ENCODE measurements at regions of chr1 and their contacts with region 1.

Region 1: GRCh38 chr1:42846257-42847110 is at the start of gene ZNF691:
- DNase-seq: peak; percentile 94
- ATAC-seq: peak; percentile 93
- H3K4me3 Mint-ChIP-seq: peak within 1 kb of the TSS; percentile 97
- H3K27ac Mint-ChIP-seq: peak within 1 kb of the TSS; percentile 89
- H3K4me1 Mint-ChIP-seq: peaks cover 34% of the 10 kb centered on the region
- H3K27me3 Mint-ChIP-seq: no peaks in the 10 kb centered on the region
- total RNA-seq, gene ZNF691: 10.5 to 11.7 TPM

Region 2: DNA sequence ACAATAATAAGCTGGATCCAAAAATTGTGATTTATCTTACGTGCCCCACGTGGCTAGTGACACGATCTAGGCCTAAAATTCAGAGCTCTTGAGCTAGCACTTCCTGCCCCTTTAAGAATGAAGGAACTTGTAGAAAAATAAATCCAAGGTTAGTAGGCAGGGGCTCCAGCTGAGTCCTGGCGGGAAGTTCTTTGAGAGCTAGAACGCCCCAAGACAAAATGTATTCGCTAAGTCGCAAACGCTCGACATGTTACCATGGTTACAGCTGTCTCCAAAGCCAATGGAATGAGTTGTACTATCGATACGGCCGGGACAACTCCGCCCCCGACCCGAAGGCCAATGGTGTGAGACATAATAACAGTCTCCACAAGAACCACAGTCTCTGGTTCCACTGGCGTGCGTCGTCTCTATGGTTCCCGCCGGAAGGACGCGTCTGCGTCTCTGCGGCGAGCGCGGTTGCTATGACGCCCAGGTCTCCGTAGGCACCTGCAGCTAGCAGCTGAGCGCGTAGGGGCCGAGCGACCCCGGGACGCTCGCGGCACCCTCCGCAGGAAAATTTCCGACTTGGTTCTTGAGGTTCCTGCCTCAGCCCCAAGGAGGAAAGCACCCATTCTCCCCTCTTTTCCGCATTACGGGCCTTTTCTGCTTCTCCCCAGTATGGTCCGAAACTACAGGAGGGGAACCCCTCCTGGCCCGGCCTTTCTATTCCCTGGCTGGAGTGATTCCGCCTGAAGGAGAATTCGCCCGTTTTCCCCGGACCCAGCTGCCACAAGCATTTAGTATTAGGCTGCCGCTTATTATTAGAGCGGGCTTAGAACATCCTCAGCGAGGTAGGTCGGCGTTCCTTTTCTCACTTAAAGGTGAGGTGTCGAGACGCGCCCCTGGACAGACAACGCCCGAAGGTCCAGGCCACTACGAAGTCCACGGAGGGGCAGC is 383.4 kb before region 1 on chr1 and contains the start of gene CCDC30:
- CTCF ChIA-PET with region 1: no interaction called
- POLR2A ChIA-PET with region 1: no interaction called
- intact Hi-C with region 1: loop called in 1 of 2 experiments (anchors 2 kb)
- DNase-seq: peak; percentile 97
- ATAC-seq: peak; percentile 100
- H3K4me3 Mint-ChIP-seq: peak within 1 kb of the TSS; percentile 77
- H3K27ac Mint-ChIP-seq: peak within 1 kb of the TSS; percentile 73
- H3K4me1 Mint-ChIP-seq: peaks cover 31% of the 10 kb centered on the region
- H3K27me3 Mint-ChIP-seq: no peaks in the 10 kb centered on the region
- total RNA-seq, gene CCDC30: 1.3 to 2.3 TPM

Region 3: DNA sequence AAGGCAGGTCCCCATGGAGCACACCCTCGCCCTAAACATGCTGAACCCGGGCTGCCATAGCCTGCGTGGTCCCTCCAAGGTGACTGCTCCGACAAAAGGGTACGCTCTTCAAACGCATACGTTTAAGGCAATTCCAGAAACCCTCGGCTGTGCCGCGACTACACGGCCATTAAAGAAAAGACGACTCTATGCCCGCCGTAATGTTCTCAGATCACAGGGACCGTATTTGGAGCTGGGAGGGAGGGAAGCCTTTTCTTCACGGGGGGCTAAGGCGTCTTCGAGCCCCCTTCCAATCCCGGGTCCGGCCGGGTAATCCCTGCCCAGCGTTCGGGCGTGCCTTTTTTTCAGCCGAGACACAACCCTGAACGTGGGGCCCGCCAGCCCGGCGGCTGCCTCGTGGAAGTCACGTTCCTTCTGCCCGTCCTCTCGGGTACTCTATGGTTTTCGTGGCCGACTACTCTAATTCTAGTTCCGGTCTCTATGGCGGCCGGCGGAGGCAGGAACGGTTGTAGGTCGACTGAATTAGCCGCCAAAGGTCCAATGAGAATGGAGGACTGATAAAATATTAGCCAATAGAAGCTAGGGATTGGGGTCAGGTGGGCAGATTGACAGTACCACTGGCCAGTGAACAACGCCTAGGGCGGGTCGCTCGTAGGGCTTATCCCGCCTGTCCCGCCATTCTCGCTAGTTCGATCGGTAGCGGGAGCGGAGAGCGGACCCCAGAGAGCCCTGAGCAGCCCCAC is 164.6 kb before region 1 on chr1 and contains the start of gene YBX1:
- CTCF ChIA-PET with region 1: no interaction called
- POLR2A ChIA-PET with region 1: interaction called, 3 read pairs
- intact Hi-C with region 1: loop called in 1 of 2 experiments (anchors 2 kb)
- DNase-seq: peak; percentile 96
- ATAC-seq: peak; percentile 97
- H3K4me3 Mint-ChIP-seq: peak within 1 kb of the TSS; percentile 93
- H3K27ac Mint-ChIP-seq: peak within 1 kb of the TSS; percentile 97
- H3K4me1 Mint-ChIP-seq: peaks cover 41% of the 10 kb centered on the region
- H3K27me3 Mint-ChIP-seq: no peaks in the 10 kb centered on the region
- total RNA-seq, gene YBX1: 1,224 to 1,435 TPM

Region 4: DNA sequence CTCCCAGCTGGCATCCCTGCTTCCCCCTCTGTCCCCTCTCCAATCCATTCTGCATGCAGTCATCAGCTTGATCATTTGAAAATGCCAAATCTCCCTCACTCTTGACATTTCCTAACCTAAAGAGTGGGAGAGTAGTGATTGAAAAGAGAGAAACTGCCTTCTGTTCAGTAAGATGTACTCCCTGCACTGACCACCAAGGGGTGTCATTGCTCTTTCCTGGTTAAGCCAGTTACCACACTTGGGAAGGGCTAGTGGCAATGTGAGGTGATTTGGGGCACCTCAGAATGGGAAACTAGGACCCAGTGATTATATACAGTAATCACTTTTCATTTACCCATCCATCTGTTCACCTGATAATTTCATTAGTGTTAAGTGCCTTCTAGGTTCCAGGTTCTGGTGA is 68.6 kb before region 1 on chr1:
- CTCF ChIA-PET with region 1: interaction called, 10 read pairs
- POLR2A ChIA-PET with region 1: no interaction called
- intact Hi-C with region 1: no loop called
- DNase-seq: peak; percentile 55
- ATAC-seq: peak; percentile 79
- H3K4me3 Mint-ChIP-seq: no peak overlapping the region
- H3K27ac Mint-ChIP-seq: no peak overlapping the region
- H3K4me1 Mint-ChIP-seq: peaks cover 14% of the 10 kb centered on the region
- H3K27me3 Mint-ChIP-seq: no peaks in the 10 kb centered on the region

Region 5: GRCh38 chr1:42797979-42798378 is 48.5 kb before region 1 on chr1:
- CTCF ChIA-PET with region 1: no interaction called
- POLR2A ChIA-PET with region 1: no interaction called
- intact Hi-C with region 1: no loop called
- DNase-seq: no peak
- ATAC-seq: no peak
- H3K4me3 Mint-ChIP-seq: no peak overlapping the region
- H3K27ac Mint-ChIP-seq: no peak overlapping the region
- H3K4me1 Mint-ChIP-seq: no peaks in the 10 kb centered on the region
- H3K27me3 Mint-ChIP-seq: no peaks in the 10 kb centered on the region

Region 6: DNA sequence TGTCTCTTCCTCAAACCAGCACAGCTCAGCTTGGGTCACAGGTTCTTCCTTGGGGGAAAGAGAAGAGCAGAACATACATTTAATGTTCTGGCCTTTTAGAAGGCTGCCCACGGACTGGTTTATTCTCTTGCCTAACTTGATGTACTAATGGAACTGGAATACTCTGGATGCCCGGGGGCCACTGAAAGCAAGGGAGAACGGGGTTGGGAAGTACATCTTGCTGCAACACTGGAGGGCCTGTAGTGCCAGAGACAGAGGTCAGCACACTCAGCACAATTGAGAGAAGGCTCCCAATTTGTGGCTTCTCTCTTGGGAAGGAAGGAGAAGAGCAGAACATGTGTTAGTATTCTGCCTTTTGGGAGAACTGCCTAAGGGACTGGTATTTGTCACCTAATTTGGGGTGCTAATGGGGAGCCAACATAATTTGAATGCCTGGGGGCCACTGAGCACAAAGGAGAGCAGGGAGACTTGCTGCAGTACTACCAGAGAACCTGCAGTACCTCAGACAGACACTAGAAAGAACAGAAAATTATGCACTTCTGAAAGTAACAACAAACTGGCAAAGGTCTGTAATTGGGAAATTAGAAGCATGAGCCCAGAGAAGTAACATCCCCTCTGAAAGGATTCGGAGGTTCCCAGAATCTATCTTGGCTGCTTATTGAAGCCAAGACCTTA is 14.0 kb after region 1 on chr1:
- CTCF ChIA-PET with region 1: interaction called, 13 read pairs
- POLR2A ChIA-PET with region 1: no interaction called
- intact Hi-C with region 1: no loop called
- DNase-seq: no peak
- ATAC-seq: no peak
- H3K4me3 Mint-ChIP-seq: no peak overlapping the region
- H3K27ac Mint-ChIP-seq: no peak overlapping the region
- H3K4me1 Mint-ChIP-seq: no peaks in the 10 kb centered on the region
- H3K27me3 Mint-ChIP-seq: peaks cover 24% of the 10 kb centered on the region

Region 7: GRCh38 chr1:42958488-42959319 is 112.2 kb after region 1 on chr1 and contains the start of gene SLC2A1:
- CTCF ChIA-PET with region 1: no interaction called
- POLR2A ChIA-PET with region 1: no interaction called
- intact Hi-C with region 1: loop called in 1 of 2 experiments (anchors 1 kb)
- DNase-seq: peak; percentile 99
- ATAC-seq: peak; percentile 89
- H3K4me3 Mint-ChIP-seq: peak within 1 kb of the TSS; percentile 89
- H3K27ac Mint-ChIP-seq: peak within 1 kb of the TSS; percentile 97
- H3K4me1 Mint-ChIP-seq: peaks cover 47% of the 10 kb centered on the region
- H3K27me3 Mint-ChIP-seq: peaks cover 6% of the 10 kb centered on the region
- total RNA-seq, gene SLC2A1: 115 to 125 TPM

Region 8: DNA sequence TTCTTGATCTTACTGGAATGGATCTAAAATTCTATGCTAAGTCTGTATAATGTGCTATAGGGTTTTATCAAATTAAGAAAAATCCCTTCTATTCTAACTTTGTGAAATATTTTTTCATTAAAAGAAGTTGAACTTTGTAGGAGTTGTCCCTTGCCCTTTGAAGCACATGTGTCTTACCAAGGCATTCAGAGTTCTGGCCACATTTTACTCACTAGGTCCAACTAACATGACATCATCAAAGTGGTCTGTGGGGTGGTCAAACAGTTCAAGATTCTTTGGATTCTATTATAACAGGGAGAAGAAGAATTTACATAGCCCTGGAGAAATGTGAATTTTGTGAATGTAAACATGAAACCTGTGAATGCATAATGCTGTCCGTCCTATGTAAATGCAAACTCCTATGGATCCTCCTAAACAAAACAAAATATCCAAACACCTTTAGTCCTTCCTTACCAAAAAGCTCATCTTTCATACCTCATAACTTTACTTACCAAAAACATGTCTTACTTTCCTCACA is 236.9 kb after region 1 on chr1:
- CTCF ChIA-PET with region 1: no interaction called
- POLR2A ChIA-PET with region 1: no interaction called
- intact Hi-C with region 1: no loop called
- DNase-seq: no peak
- ATAC-seq: no peak
- H3K4me3 Mint-ChIP-seq: no peak overlapping the region
- H3K27ac Mint-ChIP-seq: no peak overlapping the region
- H3K4me1 Mint-ChIP-seq: no peaks in the 10 kb centered on the region
- H3K27me3 Mint-ChIP-seq: peaks cover 10% of the 10 kb centered on the region

Region 9: DNA sequence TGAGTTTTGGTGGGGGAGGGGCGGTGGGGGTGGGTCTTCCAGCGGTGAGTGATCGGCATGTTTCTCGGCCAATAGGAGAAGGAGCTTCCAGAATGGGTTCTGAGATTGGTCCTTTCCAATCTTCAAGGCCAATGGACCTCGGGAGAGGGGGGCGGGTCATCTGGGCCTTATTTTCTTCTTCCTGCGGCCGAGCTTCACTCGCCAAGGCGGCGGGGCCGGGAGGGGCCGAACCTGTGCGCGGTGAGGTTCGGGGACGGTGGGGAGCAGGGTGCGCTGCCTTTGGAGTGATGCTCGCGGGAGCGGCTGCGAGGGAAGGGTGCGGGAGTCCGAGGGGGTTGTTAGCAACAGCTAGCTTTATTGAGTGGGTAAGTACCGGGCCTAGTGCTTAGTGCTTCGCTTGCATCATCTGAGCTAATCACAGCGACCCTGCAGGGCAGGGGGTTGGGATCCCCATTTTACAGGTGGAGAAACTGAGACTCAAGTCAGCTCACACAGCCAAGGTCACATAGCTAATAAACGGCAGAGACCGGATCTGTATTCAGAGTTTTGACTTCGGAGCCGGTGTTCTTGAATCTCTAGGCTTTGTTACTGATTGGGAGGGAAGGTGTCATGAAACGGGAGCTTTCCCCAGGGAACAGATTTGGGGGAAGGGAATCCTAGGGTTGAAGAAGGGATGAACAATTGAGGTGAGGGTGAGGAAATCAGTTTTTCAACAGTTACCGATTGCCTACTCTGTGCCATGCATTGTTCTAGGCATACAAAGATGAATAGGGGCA is 804.0 kb after region 1 on chr1:
- CTCF ChIA-PET with region 1: no interaction called
- POLR2A ChIA-PET with region 1: no interaction called
- intact Hi-C with region 1: loop called in 1 of 2 experiments (anchors 1 kb)
- DNase-seq: peak; percentile 95
- ATAC-seq: peak; percentile 81
- H3K4me3 Mint-ChIP-seq: peak overlapping the region; percentile 89
- H3K27ac Mint-ChIP-seq: peak overlapping the region; percentile 97
- H3K4me1 Mint-ChIP-seq: peaks cover 31% of the 10 kb centered on the region
- H3K27me3 Mint-ChIP-seq: no peaks in the 10 kb centered on the region